Gastrocnemius medialis (tissue), 4 donors: ENCODE measurements at regions of chrX and their contacts with region 1.

Region 1: DNA sequence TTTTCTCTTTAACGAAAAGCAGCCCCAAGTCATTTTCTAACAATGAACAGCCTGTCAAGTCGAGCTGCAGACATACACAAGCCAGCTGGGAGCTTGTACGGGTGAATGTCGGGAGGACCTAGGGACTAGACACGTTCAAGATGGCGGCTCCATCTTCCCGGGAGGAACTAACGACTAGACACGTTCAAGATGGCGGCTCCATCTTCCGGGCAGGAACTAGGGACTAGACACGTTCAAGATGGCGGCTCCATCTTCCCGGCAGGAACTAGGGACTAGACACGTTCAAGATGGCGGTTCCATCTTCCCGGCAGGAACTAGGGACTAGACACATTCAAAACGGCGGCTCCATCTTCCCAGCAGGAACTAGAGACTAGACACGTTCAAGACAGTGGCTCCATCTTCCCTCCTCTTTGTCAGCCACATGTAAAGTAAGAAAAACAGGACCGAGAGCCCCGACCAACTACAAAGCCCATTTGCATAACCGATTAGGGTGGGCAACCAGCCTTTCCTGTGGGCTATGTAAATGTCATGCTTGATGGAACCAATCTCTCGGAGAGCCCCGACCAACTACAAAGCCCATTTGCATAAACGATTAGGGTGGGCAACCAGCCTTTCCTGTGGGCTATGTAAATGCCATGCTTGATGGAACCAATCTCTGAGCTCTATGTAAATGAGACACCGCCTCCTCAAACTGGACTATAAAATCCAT is 175.5 kb downstream of the DHRSX start:
- DNase-seq: peak; percentile 19 to 79
- ATAC-seq: no peak
- H3K4me3 ChIP-seq: peak overlapping the region in 3 of 4 donors; percentile 44 to 58 (median 46)
- H3K27ac ChIP-seq: peak overlapping the region; percentile 51 to 93 (median 91)
- H3K4me1 ChIP-seq: peaks cover 0 to 14% of the 10 kb centered on the region in 2 donors
- H3K27me3 ChIP-seq: no peaks in the 10 kb centered on the region
- CTCF ChIP-seq: no peak
- POLR2A ChIP-seq: no peak

Region 2: DNA sequence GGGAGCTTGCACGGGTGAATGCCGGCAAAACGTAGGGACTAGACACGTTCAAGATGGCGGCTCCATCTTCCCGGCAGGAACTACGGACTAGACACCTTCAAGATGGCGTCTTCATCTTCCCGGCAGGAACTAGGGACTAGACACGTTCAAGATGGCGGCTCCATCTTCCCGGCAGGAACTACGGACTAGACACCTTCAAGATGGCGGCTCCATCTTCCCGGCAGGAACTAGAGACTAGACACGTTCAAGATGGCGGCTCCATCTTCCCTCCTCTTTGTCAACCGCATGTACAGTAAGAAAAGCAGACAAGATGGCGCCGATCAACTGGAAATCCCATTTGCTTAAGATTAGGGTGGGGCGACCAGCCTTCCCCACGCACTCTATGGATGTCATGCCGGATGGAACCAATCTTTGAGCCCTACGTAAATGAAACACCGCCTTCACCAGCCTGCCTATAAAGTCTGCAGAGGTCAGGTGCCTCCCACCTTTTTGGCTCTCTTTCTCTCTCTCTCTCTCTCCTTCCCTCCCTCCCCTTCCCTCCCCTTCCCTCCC is 1335.2 kb before region 1 on chrX:
- in situ Hi-C with region 1: loop called in 1 of 4 experiments (anchors 25 kb)
- intact Hi-C with region 1: no loop called
- DNase-seq: peak in 1 of 2 donors; percentile 81
- ATAC-seq: peak; percentile 74 to 91
- H3K4me3 ChIP-seq: peak overlapping the region in 3 of 4 donors; percentile 30 to 53 (median 35)
- H3K27ac ChIP-seq: peak overlapping the region in 3 of 4 donors; percentile 31 to 72 (median 68)
- H3K4me1 ChIP-seq: no peaks in the 10 kb centered on the region
- H3K27me3 ChIP-seq: no peaks in the 10 kb centered on the region
- CTCF ChIP-seq: no peak
- POLR2A ChIP-seq: no peak

Region 3: DNA sequence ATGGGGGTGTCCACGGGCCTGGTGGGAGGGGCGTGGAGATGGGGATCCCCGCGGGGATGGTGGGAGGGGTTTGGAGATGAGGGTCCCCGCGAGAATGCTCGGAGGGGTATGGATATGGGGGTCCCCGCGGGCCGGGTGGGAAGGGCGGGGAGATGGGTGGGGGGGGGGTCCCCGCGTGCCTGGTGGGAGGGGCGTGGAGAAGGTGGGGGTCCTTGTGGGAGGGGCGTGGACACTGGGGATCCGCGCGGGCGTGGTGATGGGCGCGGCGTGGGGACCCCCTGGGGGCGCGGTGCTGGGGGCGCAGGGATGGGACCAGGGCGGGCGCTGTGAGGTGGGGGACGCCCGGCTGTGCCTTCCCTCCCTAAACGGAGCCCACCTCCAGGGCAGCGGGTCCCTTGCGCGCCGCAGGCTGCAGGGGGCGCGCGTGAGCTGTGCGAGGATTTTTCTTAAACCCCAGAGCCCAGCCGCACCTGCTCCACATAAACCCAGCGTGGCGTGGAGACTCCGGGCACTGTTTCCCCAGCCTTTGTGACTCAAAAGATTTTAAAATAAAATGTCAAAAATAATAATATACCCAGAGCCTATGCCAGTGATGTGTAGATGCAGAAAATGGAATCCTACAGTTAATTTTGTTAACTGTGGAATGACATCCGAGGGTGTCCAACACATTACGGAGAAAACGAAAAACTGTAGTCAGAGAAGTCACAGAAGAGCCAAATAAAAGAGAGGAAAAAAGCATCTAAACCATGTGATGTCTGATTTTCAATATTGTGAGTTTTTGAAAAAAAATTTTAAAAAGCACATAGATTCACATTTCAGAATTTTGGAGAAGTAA is 871.1 kb before region 1 on chrX:
- in situ Hi-C with region 1: no loop called
- intact Hi-C with region 1: loop called (anchors 10 kb)
- DNase-seq: peak; percentile 57 to 74
- ATAC-seq: peak; percentile 28 to 51
- H3K4me3 ChIP-seq: peak overlapping the region; percentile 49 to 96 (median 70)
- H3K27ac ChIP-seq: peak overlapping the region; percentile 61 to 98 (median 82)
- H3K4me1 ChIP-seq: peaks cover 10 to 15% of the 10 kb centered on the region in 2 donors
- H3K27me3 ChIP-seq: no peaks in the 10 kb centered on the region
- CTCF ChIP-seq: peak; percentile 89 to 97 (median 91)
- POLR2A ChIP-seq: no peak

Region 4: GRCh38 chrX:2385224-2385623 is 60.0 kb after region 1 on chrX:
- in situ Hi-C with region 1: no loop called
- intact Hi-C with region 1: loop called (anchors 1 kb)
- DNase-seq: no peak
- ATAC-seq: no peak
- H3K4me3 ChIP-seq: no peak overlapping the region
- H3K27ac ChIP-seq: no peak overlapping the region
- H3K4me1 ChIP-seq: peaks cover 22 to 25% of the 10 kb centered on the region in 2 donors
- H3K27me3 ChIP-seq: no peaks in the 10 kb centered on the region
- CTCF ChIP-seq: no peak
- POLR2A ChIP-seq: no peak

Region 5: GRCh38 chrX:2500267-2501075 is 175.2 kb after region 1 on chrX and contains the starts of genes DHRSX and ZBED1:
- in situ Hi-C with region 1: no loop called
- intact Hi-C with region 1: loop called (anchors 5 kb)
- DNase-seq: peak in 1 of 2 donors; percentile 33
- ATAC-seq: peak; percentile 43
- H3K4me3 ChIP-seq: peak within 1 kb of the TSS; percentile 63 to 88 (median 69)
- H3K27ac ChIP-seq: peak within 1 kb of the TSS; percentile 81 to 99 (median 94)
- H3K4me1 ChIP-seq: peaks cover 23 to 29% of the 10 kb centered on the region in 2 donors
- H3K27me3 ChIP-seq: no peaks in the 10 kb centered on the region
- CTCF ChIP-seq: no peak
- POLR2A ChIP-seq: peak in 1 of 2 donors; percentile 24
- total RNA-seq, gene DHRSX: 9.8 to 31.1 (median 13.6) TPM
- total RNA-seq, gene ZBED1: 76.8 to 191 (median 131) TPM